ENCODE measurements at regions of chr9 and their contacts with region 1.

Region 1: GRCh38 chr9:36328798-36329411 is 70.7 kb upstream of the GNE start:
- DNase-seq: peak; percentile 63
- ATAC-seq: peak; percentile 86
- H3K4me3 ChIP-seq: no peak overlapping the region
- H3K27ac ChIP-seq: no peak overlapping the region
- H3K4me1 ChIP-seq: no peaks in the 10 kb centered on the region; a peak in 1 of 4 replicates
- H3K27me3 ChIP-seq: no peaks in the 10 kb centered on the region
- CTCF ChIP-seq: peak; percentile 67 to 86 (median 84)
- POLR2A ChIP-seq: no peak
- RAD21 ChIP-seq: peak; percentile 87

Region 2: GRCh38 chr9:36102742-36103495 is 226.0 kb before region 1 on chr9:
- CTCF ChIA-PET with region 1: interaction called, 14 read pairs
- POLR2A ChIA-PET with region 1: no interaction called
- RAD21 ChIA-PET with region 1: no interaction called
- intact Hi-C with region 1: loop called (anchors 10 kb)
- DNase-seq: peak; percentile 57
- ATAC-seq: peak; percentile 97
- H3K4me3 ChIP-seq: no peak overlapping the region
- H3K27ac ChIP-seq: no peak overlapping the region
- H3K4me1 ChIP-seq: peaks cover 0 to 24% of the 10 kb centered on the region in 2 experiments; a peak in 2 of 4 replicates
- H3K27me3 ChIP-seq: no peaks in the 10 kb centered on the region
- CTCF ChIP-seq: peak; percentile 76 to 93 (median 90)
- POLR2A ChIP-seq: no peak
- RAD21 ChIP-seq: peak; percentile 71

Region 3: DNA sequence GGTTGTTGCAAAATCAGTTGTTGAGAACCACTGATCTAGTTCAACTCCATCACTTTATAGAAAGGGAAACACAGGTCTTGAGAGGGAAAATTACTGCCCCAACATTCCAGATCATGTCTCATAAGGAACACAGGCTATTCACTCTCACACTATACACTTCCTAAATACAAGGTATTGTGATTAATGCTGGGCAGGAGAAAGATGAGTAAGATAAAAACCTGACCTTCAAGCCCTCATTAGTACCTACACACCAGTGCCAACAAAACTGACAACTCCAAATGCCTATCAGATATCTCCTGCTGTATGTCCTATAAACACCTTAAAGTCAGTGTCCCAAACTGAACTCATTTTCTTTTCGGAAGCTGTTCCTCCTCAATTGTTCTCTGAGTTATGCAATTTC is 78.8 kb before region 1 on chr9:
- CTCF ChIA-PET with region 1: interaction called, 11 read pairs
- POLR2A ChIA-PET with region 1: no interaction called
- RAD21 ChIA-PET with region 1: interaction called in 1 of 2 experiments, 3 read pairs
- intact Hi-C with region 1: loop called (anchors 2 kb)
- DNase-seq: no peak
- ATAC-seq: no peak
- H3K4me3 ChIP-seq: no peak overlapping the region
- H3K27ac ChIP-seq: no peak overlapping the region
- H3K4me1 ChIP-seq: no peaks in the 10 kb centered on the region
- H3K27me3 ChIP-seq: no peaks in the 10 kb centered on the region
- CTCF ChIP-seq: no peak
- POLR2A ChIP-seq: no peak
- RAD21 ChIP-seq: no peak